Calu3 (cell line): ENCODE measurements at regions of chr14 and their contacts with region 1.

Region 1: GRCh38 chr14:75738192-75738591 is 77.1 kb downstream of the TTLL5 start:
- DNase-seq: no peak
- H3K4me3 Mint-ChIP-seq: no peak overlapping the region
- H3K27ac Mint-ChIP-seq: no peak overlapping the region
- H3K4me1 Mint-ChIP-seq: no peaks in the 10 kb centered on the region
- H3K27me3 Mint-ChIP-seq: no peaks in the 10 kb centered on the region
- CTCF ChIP-seq: no peak

Region 2: GRCh38 chr14:75307700-75308379 is 430.4 kb before region 1 on chr14:
- CTCF ChIA-PET with region 1: no interaction called
- intact Hi-C with region 1: no loop called
- DNase-seq: peak; percentile 90
- H3K4me3 Mint-ChIP-seq: no peak overlapping the region
- H3K27ac Mint-ChIP-seq: no peak overlapping the region
- H3K4me1 Mint-ChIP-seq: peaks cover 22% of the 10 kb centered on the region
- H3K27me3 Mint-ChIP-seq: no peaks in the 10 kb centered on the region
- CTCF ChIP-seq: peak; percentile 77

Region 3: DNA sequence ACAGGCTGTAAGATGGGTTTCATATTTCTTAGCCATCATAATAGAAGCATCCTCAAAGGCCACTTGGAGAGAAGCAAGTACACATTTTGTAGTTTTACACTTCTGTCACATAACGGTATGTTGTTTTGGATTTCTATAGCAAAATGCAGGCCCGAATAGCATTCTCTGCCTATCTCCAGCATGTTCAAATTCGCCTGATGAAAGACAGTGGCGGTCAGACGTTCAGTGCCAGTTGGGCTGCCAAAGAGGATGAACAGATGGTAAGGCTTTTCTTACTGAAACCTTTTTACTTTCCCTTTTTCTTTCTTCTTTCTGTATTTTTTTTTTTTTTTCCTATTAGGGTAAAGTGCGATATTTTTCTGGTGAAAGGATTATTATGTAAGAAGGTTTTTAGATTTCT is 33.4 kb after region 1 on chr14:
- CTCF ChIA-PET with region 1: no interaction called
- intact Hi-C with region 1: loop called (anchors 5 kb)
- DNase-seq: no peak
- H3K4me3 Mint-ChIP-seq: no peak overlapping the region
- H3K27ac Mint-ChIP-seq: no peak overlapping the region
- H3K4me1 Mint-ChIP-seq: no peaks in the 10 kb centered on the region
- H3K27me3 Mint-ChIP-seq: no peaks in the 10 kb centered on the region
- CTCF ChIP-seq: no peak

Region 4: GRCh38 chr14:75794615-75795038 is 56.4 kb after region 1 on chr14:
- CTCF ChIA-PET with region 1: no interaction called
- intact Hi-C with region 1: no loop called
- DNase-seq: no peak
- H3K4me3 Mint-ChIP-seq: no peak overlapping the region
- H3K27ac Mint-ChIP-seq: no peak overlapping the region
- H3K4me1 Mint-ChIP-seq: no peaks in the 10 kb centered on the region
- H3K27me3 Mint-ChIP-seq: no peaks in the 10 kb centered on the region
- CTCF ChIP-seq: no peak